ENCODE measurements at regions of chr3 and their contacts with region 1.

Region 1: DNA sequence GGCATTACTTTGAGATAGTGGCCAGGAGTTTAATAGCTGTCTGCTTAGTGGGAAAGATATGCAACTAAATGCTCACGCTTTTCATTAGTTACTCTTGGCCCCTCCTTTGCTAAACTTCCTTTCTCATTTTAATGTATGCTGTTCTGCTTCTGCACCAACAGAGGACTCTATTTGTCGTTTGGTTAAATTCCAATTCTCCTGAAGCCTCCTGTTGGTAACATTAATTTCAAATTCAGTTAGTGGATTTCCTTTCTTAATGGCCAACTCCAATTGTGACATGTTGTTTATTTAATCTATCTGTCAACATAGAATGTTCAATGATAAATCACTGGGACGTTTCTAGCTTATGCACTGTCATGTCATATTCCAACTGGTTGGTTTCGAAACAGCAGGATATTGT is 467.3 kb upstream of the BCHE start:
- DNase-seq: no peak
- H3K4me3 ChIP-seq: no peak overlapping the region
- H3K27ac ChIP-seq: no peak overlapping the region
- H3K4me1 ChIP-seq: no peaks in the 10 kb centered on the region
- H3K27me3 ChIP-seq: no peaks in the 10 kb centered on the region
- CTCF ChIP-seq: no peak
- POLR2A ChIP-seq: no peak

Region 2: GRCh38 chr3:166274351-166275023 is 30.1 kb before region 1 on chr3:
- intact Hi-C with region 1: no loop called
- DNase-seq: no peak
- H3K4me3 ChIP-seq: no peak overlapping the region
- H3K27ac ChIP-seq: no peak overlapping the region
- H3K4me1 ChIP-seq: no peaks in the 10 kb centered on the region
- H3K27me3 ChIP-seq: no peaks in the 10 kb centered on the region
- CTCF ChIP-seq: no peak
- POLR2A ChIP-seq: no peak

Region 3: GRCh38 chr3:167274141-167274874 is 969.8 kb after region 1 on chr3:
- intact Hi-C with region 1: loop called (anchors 10 kb)
- DNase-seq: no peak
- H3K4me3 ChIP-seq: no peak overlapping the region
- H3K27ac ChIP-seq: no peak overlapping the region
- H3K4me1 ChIP-seq: no peaks in the 10 kb centered on the region
- H3K27me3 ChIP-seq: no peaks in the 10 kb centered on the region
- CTCF ChIP-seq: no peak
- POLR2A ChIP-seq: no peak